ENCODE measurements at regions of chr11 and their contacts with region 1.

Region 1: DNA sequence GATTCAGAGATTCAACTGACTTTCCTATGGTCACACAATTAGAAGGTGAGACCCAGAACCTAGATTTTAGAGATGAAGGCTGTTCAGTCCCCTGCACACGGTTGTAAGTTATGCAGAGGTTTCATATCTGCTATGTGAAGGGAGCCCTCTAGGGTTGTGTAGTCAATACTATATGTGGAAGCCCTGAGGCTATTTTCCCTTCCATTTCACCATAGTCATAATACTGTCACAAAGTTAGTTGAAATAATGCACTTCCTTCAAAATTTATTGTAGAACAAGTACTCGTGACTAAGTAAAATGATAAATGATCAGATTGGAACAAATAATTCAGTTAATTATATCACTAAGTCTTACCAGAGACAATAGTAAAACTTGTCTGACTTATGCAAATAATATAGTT is 48.8 kb downstream of the ENDOD1 start:
- DNase-seq: peak in 1 of 2 experiments; percentile 61
- H3K4me3 ChIP-seq: no peak overlapping the region
- H3K4me3 Mint-ChIP-seq: no peak overlapping the region
- H3K27ac Mint-ChIP-seq: no peak overlapping the region
- H3K4me1 ChIP-seq: no peaks in the 10 kb centered on the region
- H3K4me1 Mint-ChIP-seq: peaks cover 5% of the 10 kb centered on the region
- H3K27me3 ChIP-seq: no peaks in the 10 kb centered on the region
- H3K27me3 Mint-ChIP-seq: peaks cover 3% of the 10 kb centered on the region
- CTCF ChIP-seq: peak; percentile 44 to 71

Region 2: GRCh38 chr11:94997437-94997836 is 141.0 kb before region 1 on chr11:
- CTCF ChIA-PET with region 1: no interaction called
- POLR2A ChIA-PET with region 1: no interaction called
- intact Hi-C with region 1: loop called (anchors 1 kb)
- DNase-seq: peak in 1 of 2 experiments; percentile 54
- H3K4me3 ChIP-seq: no peak overlapping the region
- H3K4me3 Mint-ChIP-seq: no peak overlapping the region
- H3K27ac Mint-ChIP-seq: no peak overlapping the region
- H3K4me1 ChIP-seq: 0 out of 2 replicates have a peak, but pooled peaks cover 4% of the 10 kb centered on the region
- H3K4me1 Mint-ChIP-seq: no peaks in the 10 kb centered on the region
- H3K27me3 ChIP-seq: no peaks in the 10 kb centered on the region
- H3K27me3 Mint-ChIP-seq: peaks cover 3% of the 10 kb centered on the region
- CTCF ChIP-seq: peak; percentile 46 to 58

Region 3: DNA sequence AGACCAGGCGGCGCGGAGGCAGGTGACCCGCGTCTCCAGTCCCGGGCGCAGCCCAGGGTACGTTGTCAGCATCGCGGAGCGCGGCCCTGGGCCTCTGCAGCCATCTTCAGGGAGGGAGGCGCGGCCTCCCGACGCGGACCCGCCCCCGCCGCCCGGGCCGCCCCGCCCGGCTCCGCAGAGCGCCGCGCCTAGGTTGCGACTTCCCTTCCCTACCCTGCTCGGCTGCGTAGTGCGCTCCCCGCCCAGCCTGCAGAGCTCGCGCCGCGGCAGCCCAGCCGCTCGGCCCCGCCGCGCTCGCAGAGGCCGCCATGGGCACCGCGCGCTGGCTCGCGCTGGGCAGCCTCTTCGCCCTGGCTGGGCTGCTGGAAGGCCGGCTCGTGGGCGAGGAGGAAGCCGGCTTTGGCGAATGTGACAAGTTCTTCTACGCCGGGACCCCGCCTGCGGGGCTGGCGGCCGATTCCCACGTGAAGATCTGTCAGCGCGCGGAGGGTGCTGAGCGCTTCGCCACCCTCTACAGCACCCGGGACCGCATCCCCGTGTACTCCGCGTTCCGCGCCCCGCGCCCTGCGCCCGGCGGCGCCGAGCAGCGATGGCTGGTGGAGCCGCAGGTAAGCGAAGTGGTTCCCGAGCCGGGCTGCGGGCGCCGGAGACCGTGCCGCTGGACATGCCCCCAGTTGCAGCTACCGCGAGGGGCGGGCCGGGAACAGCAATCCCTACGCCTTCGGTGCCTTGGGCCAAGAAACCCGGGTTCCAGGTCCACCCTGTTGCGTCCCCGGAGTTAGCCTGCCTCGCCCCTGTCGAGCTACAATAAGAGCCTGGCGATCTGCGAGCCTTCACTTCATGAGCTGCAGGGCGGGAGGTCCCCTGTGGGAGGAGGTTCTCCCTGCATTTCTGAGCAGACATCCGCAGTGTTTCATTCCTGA is 48.6 kb before region 1 on chr11 and contains the start of gene ENDOD1:
- CTCF ChIA-PET with region 1: no interaction called
- POLR2A ChIA-PET with region 1: interaction called, 3 read pairs
- intact Hi-C with region 1: loop called (anchors 1 kb)
- DNase-seq: peak; percentile 89 to 93
- H3K4me3 ChIP-seq: peak within 1 kb of the TSS; percentile 91
- H3K4me3 Mint-ChIP-seq: peak within 1 kb of the TSS; percentile 89
- H3K27ac Mint-ChIP-seq: peak within 1 kb of the TSS; percentile 71
- H3K4me1 ChIP-seq: peaks cover 47% of the 10 kb centered on the region
- H3K4me1 Mint-ChIP-seq: peaks cover 29% of the 10 kb centered on the region
- H3K27me3 ChIP-seq: no peaks in the 10 kb centered on the region
- H3K27me3 Mint-ChIP-seq: peaks cover 5% of the 10 kb centered on the region
- CTCF ChIP-seq: peak; percentile 24 to 40
- total RNA-seq, gene ENDOD1: 22.7 and 23.0 TPM in 2 replicates

Measured in Caco-2 (cell line).